IMR-90 (cell line): ENCODE measurements at regions of chr6 and their contacts with region 1.

Region 1: DNA sequence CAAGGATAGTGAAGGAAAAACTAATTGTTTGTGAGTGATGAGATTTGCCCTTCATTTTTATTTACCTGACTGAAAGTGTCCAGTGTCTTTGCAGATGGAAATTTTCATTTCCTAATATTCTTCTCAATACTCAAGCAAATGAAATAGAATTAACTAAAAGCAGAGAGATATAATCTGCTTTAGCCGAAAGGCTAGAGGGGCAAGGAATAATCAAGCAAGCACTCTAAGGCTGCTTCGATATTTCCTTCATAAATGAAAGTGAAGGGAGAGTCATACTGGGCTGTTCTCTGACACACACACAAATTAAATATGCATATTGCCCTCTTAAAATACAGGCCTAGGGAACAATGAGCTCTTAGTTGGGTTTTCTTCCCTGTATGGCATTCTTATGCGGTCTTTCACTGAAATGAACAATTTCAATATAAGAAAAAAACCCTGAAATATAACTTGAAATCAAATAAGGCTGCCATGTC is 47.5 kb upstream of the POPDC3 start:
- DNase-seq: no peak
- ATAC-seq: no peak
- H3K4me3 ChIP-seq: no peak overlapping the region
- H3K27ac ChIP-seq: no peak overlapping the region
- H3K4me1 ChIP-seq: no peaks in the 10 kb centered on the region
- H3K27me3 ChIP-seq: peaks cover 3% of the 10 kb centered on the region; the same call in 1 of the 2 replicates
- CTCF ChIP-seq: no peak
- POLR2A ChIP-seq: no peak
- RAD21 ChIP-seq: no peak

Region 2: DNA sequence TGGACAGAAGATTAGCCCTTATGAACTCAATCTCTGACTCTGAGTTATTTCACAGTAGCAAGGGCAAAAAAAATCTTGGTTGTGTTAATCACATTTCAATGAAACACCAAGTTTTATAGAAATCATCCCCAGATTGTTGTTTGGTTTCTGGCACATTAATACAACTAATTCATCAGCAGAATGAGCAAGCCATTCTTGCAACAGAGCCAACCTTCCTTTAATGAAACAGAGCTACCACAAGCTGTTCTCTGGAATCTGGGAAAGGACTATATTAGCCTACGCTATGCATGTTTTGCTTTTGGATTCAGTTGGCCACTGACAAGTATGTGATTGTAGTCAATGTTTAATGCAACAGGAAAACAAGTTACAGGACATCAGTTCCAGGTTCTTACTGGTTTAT is 33.7 kb before region 1 on chr6:
- CTCF ChIA-PET with region 1: interaction called, 10 read pairs
- POLR2A ChIA-PET with region 1: no interaction called
- dilution Hi-C with region 1: no loop called
- in situ Hi-C with region 1: no loop called
- intact Hi-C with region 1: no loop called
- DNase-seq: peak; percentile 80
- ATAC-seq: peak; percentile 86
- H3K4me3 ChIP-seq: no peak overlapping the region
- H3K27ac ChIP-seq: no peak overlapping the region
- H3K4me1 ChIP-seq: peaks cover 3% of the 10 kb centered on the region
- H3K27me3 ChIP-seq: no peaks in the 10 kb centered on the region
- CTCF ChIP-seq: no peak
- POLR2A ChIP-seq: no peak
- RAD21 ChIP-seq: no peak

Region 3: GRCh38 chr6:105445481-105445880 is 218.2 kb after region 1 on chr6:
- CTCF ChIA-PET with region 1: no interaction called
- POLR2A ChIA-PET with region 1: no interaction called
- dilution Hi-C with region 1: no loop called
- in situ Hi-C with region 1: no loop called
- intact Hi-C with region 1: no loop called
- DNase-seq: no peak
- ATAC-seq: no peak
- H3K4me3 ChIP-seq: no peak overlapping the region
- H3K27ac ChIP-seq: no peak overlapping the region
- H3K4me1 ChIP-seq: no peaks in the 10 kb centered on the region
- H3K27me3 ChIP-seq: no peaks in the 10 kb centered on the region; the same call in none of the 2 replicates
- CTCF ChIP-seq: no peak
- POLR2A ChIP-seq: no peak
- RAD21 ChIP-seq: no peak